K562 (cell line): ENCODE measurements at regions of chr14 and their contacts with region 1.

Region 1: DNA sequence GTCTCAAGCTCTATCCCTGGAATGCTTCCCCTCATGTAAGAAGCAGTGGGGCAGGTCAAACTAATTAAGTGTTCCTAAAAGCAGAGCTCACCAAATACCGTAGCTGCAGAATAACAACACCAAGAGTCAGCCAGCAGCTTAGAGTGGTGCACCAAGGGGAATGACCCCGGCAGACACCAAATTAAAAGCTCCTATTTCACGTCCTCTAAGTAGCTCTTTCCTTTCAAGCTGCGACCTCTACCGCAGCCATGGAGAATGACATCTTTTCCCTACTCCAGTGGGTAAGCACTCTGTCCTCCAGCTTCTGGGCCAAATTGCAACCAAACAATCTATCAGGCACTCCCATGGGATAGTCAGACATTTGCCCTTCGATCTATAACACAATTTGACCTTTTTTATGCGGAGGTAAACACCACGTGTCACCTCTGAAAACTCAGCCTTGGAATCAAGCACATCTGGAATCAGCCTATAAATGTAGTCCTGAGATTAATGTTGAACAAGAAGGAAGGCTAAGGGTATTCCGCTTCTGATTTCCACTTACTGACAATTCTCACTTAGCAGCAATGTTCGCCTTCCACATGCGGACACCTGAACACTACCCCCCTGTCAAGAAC is 67.6 kb upstream of the CDKN3 start:
- DNase-seq: peak; percentile 25 to 38 (median 32)
- ATAC-seq: peak; percentile 88
- H3K4me3 ChIP-seq: no peak overlapping the region
- H3K27ac ChIP-seq: no peak overlapping the region
- H3K4me1 ChIP-seq: no peaks in the 10 kb centered on the region
- H3K27me3 ChIP-seq: no peaks in the 10 kb centered on the region
- CTCF ChIP-seq: peak; percentile 43 to 62 (median 58)
- EP300 ChIP-seq: no peak
- POLR2A ChIP-seq: no peak
- RAD21 ChIP-seq: peak in 1 of 2 experiments; percentile 56; a peak in 3 of 4 replicates

Region 2: DNA sequence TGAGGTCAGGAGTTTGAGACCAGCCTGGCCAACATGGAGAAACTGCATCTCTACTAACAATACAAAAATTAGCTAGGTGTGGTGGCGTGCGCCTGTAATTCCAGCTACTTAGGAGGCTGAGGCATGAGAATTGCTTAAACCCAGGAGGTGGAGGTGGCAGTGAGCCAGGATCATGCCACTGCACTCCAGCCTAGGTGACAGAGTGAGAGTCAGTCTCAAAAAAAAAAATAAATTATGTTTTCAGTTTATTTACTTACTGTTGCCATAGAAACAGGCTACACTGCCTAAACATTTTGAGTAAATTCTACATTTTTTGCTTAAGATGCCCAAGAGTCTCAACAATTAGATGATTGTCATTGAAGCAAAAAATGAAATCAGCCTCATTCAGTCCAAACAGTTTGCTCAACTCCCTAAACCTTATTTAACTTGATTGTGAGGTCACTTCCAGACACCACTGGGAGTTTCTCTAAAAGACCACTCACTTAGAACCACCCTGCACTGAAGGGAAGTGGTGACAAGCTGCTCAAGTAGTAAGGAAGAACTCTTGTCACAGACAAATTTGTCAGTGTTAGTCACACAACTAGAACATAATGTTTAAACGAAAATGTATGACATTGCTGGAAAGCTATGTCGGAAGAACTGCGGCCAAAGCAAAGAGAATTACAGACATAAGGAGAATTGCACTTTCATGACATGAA is 1528.0 kb before region 1 on chr14:
- CTCF ChIA-PET with region 1: no interaction called
- POLR2A ChIA-PET with region 1: no interaction called
- in situ Hi-C with region 1: loop called (anchors 25 kb)
- intact Hi-C with region 1: no loop called
- DNase-seq: no peak
- ATAC-seq: no peak
- H3K4me3 ChIP-seq: no peak overlapping the region
- H3K27ac ChIP-seq: no peak overlapping the region
- H3K4me1 ChIP-seq: no peaks in the 10 kb centered on the region
- H3K27me3 ChIP-seq: no peaks in the 10 kb centered on the region
- CTCF ChIP-seq: no peak
- EP300 ChIP-seq: no peak
- POLR2A ChIP-seq: no peak
- RAD21 ChIP-seq: no peak

Region 3: GRCh38 chr14:53979113-53979681 is 350.0 kb before region 1 on chr14:
- CTCF ChIA-PET with region 1: no interaction called
- POLR2A ChIA-PET with region 1: no interaction called
- in situ Hi-C with region 1: no loop called
- intact Hi-C with region 1: no loop called
- DNase-seq: no peak
- ATAC-seq: no peak
- H3K4me3 ChIP-seq: no peak overlapping the region
- H3K27ac ChIP-seq: no peak overlapping the region
- H3K4me1 ChIP-seq: no peaks in the 10 kb centered on the region
- H3K27me3 ChIP-seq: no peaks in the 10 kb centered on the region
- CTCF ChIP-seq: no peak
- EP300 ChIP-seq: no peak
- POLR2A ChIP-seq: no peak
- RAD21 ChIP-seq: no peak

Region 4: GRCh38 chr14:54058505-54058904 is 270.7 kb before region 1 on chr14:
- CTCF ChIA-PET with region 1: no interaction called
- POLR2A ChIA-PET with region 1: no interaction called
- in situ Hi-C with region 1: no loop called
- intact Hi-C with region 1: no loop called
- DNase-seq: no peak
- ATAC-seq: no peak
- H3K4me3 ChIP-seq: no peak overlapping the region
- H3K27ac ChIP-seq: no peak overlapping the region
- H3K4me1 ChIP-seq: no peaks in the 10 kb centered on the region
- H3K27me3 ChIP-seq: no peaks in the 10 kb centered on the region
- CTCF ChIP-seq: no peak
- EP300 ChIP-seq: no peak
- POLR2A ChIP-seq: no peak
- RAD21 ChIP-seq: no peak